Ovary (tissue), 10 donors: ENCODE measurements at regions of chr5 and their contacts with region 1.

Region 1: GRCh38 chr5:5005353-5005752 is 134.8 kb upstream of the ADAMTS16 start:
- DNase-seq: no peak
- H3K4me3 ChIP-seq: no peak overlapping the region
- H3K27ac ChIP-seq: no peak overlapping the region
- H3K4me1 ChIP-seq: no peaks in the 10 kb centered on the region
- H3K27me3 ChIP-seq: no peaks in the 10 kb centered on the region
- CTCF ChIP-seq: no peak
- EP300 ChIP-seq: no peak
- POLR2A ChIP-seq: no peak

Region 2: GRCh38 chr5:5042806-5043205 is 37.5 kb after region 1 on chr5:
- intact Hi-C with region 1: loop called in 1 of 4 experiments (anchors 2 kb)
- DNase-seq: no peak
- H3K4me3 ChIP-seq: no peak overlapping the region
- H3K27ac ChIP-seq: no peak overlapping the region
- H3K4me1 ChIP-seq: no peaks in the 10 kb centered on the region
- H3K27me3 ChIP-seq: no peaks in the 10 kb centered on the region
- CTCF ChIP-seq: no peak
- EP300 ChIP-seq: no peak
- POLR2A ChIP-seq: no peak

Region 3: GRCh38 chr5:5055708-5056107 is 50.4 kb after region 1 on chr5:
- intact Hi-C with region 1: no loop called
- DNase-seq: no peak
- H3K4me3 ChIP-seq: no peak overlapping the region
- H3K27ac ChIP-seq: no peak overlapping the region
- H3K4me1 ChIP-seq: no peaks in the 10 kb centered on the region
- H3K27me3 ChIP-seq: no peaks in the 10 kb centered on the region
- CTCF ChIP-seq: no peak
- EP300 ChIP-seq: no peak
- POLR2A ChIP-seq: no peak